ENCODE measurements at regions of chr1 and their contacts with region 1.

Region 1: GRCh38 chr1:245156081-245156735 is 1.4 kb downstream of the KIF26B start:
- DNase-seq: no peak
- ATAC-seq: peak; percentile 96
- H3K4me3 ChIP-seq: peak overlapping the region; percentile 50
- H3K27ac ChIP-seq: no peak overlapping the region
- H3K4me1 ChIP-seq: peaks cover 18% of the 10 kb centered on the region
- H3K27me3 ChIP-seq: peaks cover 12 to 26% of the 10 kb centered on the region in 2 experiments
- CTCF ChIP-seq: peak; percentile 57 to 81 (median 77)
- EP300 ChIP-seq: no peak
- POLR2A ChIP-seq: no peak
- RAD21 ChIP-seq: peak; percentile 65

Region 2: DNA sequence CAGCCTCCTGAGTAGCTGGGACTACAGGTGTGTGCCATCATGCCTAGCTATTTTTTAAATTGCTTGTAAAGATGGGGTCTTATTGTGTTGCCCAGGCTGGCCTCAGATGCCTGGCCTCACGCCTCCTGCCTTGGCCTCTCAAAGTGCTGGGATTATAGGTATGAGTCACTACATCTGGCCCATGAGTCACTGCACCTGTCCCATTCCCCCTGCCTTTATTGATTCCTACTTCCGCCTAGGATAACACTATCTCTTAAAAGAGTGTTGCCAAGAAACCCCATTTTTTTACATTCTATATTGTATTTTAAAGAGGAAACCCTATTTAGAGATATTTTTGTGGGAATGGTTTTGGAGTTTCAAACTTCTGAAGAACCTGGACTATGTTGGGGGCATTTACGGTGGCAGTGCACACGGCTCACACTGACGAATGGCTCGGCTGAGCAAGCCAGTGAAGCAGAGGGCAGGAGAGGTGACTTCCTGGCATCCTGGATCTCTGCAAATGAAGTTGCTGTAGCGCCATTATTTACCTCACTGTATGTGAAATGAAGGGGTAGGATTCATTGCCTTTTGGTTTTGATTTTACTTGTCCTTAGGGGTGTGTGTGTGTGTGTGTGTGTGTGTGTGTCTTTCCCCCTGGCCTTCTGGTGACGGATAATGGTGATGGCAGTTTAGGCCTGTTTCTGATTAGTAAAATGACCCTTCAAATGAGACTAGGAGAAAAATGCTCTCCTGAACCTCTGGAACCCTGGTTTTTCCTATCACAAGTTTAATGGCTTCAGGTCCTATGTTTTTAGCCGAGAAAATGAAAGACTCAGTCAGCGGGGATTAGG is 21.1 kb after region 1 on chr1:
- CTCF ChIA-PET with region 1: no interaction called
- POLR2A ChIA-PET with region 1: no interaction called
- RAD21 ChIA-PET with region 1: no interaction called
- SMC1A ChIA-PET with region 1: no interaction called
- in situ Hi-C with region 1: no loop called
- intact Hi-C with region 1: no loop called
- DNase-seq: no peak
- ATAC-seq: no peak
- H3K4me3 ChIP-seq: no peak overlapping the region
- H3K27ac ChIP-seq: no peak overlapping the region
- H3K4me1 ChIP-seq: no peaks in the 10 kb centered on the region
- H3K27me3 ChIP-seq: peaks cover 0 to 1% of the 10 kb centered on the region in 2 experiments; a peak in 2 of 4 replicates
- CTCF ChIP-seq: no peak
- EP300 ChIP-seq: no peak
- POLR2A ChIP-seq: no peak
- RAD21 ChIP-seq: no peak

Region 3: DNA sequence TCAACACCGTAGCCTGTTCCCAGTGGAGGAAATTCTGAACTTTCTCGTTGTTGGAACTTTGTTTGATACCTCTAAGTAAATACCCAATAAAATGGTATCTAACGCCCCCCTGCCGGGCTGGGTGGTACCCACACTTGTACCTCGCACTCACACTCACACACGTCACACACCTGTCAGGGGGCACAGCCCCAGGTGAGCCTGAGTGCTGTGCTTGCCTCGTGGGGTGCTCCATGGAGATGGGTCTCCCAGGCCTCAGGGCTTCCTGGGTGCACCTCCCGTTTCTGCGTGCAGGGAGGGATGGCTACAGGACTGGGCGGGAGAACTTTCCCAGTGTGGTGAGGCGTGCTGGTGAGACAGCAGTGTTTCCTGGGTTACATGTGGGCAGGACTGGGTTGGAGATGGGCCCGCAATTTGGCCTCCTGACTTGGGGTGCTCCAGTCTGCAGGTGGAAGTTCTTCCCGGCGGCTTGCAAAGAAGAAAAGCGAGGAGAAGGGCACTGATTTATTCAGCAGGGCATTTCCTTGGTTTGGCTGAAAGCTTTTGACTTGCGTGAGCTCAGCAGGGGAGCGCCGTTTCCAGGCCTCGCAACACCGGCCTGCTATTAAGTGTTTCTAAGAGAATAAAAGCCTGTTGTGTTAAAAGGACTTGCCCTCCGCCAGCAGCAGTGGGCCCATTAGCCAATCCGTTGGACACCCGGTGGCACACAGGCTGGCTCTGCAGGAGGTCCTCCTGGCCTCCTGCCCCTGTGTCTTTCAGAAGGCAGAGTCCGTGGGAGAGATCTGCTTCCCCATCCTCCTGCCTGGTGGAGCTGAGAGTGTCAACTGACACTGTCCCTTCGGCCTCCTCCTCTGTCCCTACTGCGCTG is 78.2 kb after region 1 on chr1:
- CTCF ChIA-PET with region 1: no interaction called
- POLR2A ChIA-PET with region 1: no interaction called
- RAD21 ChIA-PET with region 1: no interaction called
- SMC1A ChIA-PET with region 1: no interaction called
- in situ Hi-C with region 1: no loop called
- intact Hi-C with region 1: no loop called
- DNase-seq: no peak
- ATAC-seq: no peak
- H3K4me3 ChIP-seq: no peak overlapping the region
- H3K27ac ChIP-seq: no peak overlapping the region
- H3K4me1 ChIP-seq: no peaks in the 10 kb centered on the region
- H3K27me3 ChIP-seq: peaks cover 2% of the 10 kb centered on the region in 2 experiments; a peak in 2 of 4 replicates
- CTCF ChIP-seq: no peak
- EP300 ChIP-seq: no peak
- POLR2A ChIP-seq: no peak
- RAD21 ChIP-seq: no peak

Region 4: GRCh38 chr1:245277276-245277675 is 121.1 kb after region 1 on chr1:
- CTCF ChIA-PET with region 1: interaction called, 3 read pairs
- POLR2A ChIA-PET with region 1: no interaction called
- RAD21 ChIA-PET with region 1: no interaction called
- SMC1A ChIA-PET with region 1: no interaction called
- in situ Hi-C with region 1: no loop called
- intact Hi-C with region 1: loop called (anchors 10 kb)
- DNase-seq: no peak
- ATAC-seq: peak; percentile 30; the same call in 1 of the 3 replicates
- H3K4me3 ChIP-seq: no peak overlapping the region
- H3K27ac ChIP-seq: no peak overlapping the region
- H3K4me1 ChIP-seq: no peaks in the 10 kb centered on the region
- H3K27me3 ChIP-seq: no peaks in the 10 kb centered on the region
- CTCF ChIP-seq: peak in 2 of 3 experiments; percentile 7 to 31; a peak in 1 of 6 replicates
- EP300 ChIP-seq: no peak
- POLR2A ChIP-seq: no peak
- RAD21 ChIP-seq: no peak

Region 5: GRCh38 chr1:245512980-245513578 is 356.9 kb after region 1 on chr1:
- CTCF ChIA-PET with region 1: no interaction called
- POLR2A ChIA-PET with region 1: no interaction called
- RAD21 ChIA-PET with region 1: interaction called, 3 read pairs
- SMC1A ChIA-PET with region 1: no interaction called
- in situ Hi-C with region 1: no loop called
- intact Hi-C with region 1: loop called (anchors 10 kb)
- DNase-seq: no peak
- ATAC-seq: peak; percentile 69
- H3K4me3 ChIP-seq: no peak overlapping the region
- H3K27ac ChIP-seq: no peak overlapping the region
- H3K4me1 ChIP-seq: no peaks in the 10 kb centered on the region
- H3K27me3 ChIP-seq: no peaks in the 10 kb centered on the region; a peak in 1 of 4 replicates
- CTCF ChIP-seq: peak in 2 of 3 experiments; percentile 13 to 21; a peak in 1 of 6 replicates
- EP300 ChIP-seq: no peak
- POLR2A ChIP-seq: no peak
- RAD21 ChIP-seq: no peak

Region 6: DNA sequence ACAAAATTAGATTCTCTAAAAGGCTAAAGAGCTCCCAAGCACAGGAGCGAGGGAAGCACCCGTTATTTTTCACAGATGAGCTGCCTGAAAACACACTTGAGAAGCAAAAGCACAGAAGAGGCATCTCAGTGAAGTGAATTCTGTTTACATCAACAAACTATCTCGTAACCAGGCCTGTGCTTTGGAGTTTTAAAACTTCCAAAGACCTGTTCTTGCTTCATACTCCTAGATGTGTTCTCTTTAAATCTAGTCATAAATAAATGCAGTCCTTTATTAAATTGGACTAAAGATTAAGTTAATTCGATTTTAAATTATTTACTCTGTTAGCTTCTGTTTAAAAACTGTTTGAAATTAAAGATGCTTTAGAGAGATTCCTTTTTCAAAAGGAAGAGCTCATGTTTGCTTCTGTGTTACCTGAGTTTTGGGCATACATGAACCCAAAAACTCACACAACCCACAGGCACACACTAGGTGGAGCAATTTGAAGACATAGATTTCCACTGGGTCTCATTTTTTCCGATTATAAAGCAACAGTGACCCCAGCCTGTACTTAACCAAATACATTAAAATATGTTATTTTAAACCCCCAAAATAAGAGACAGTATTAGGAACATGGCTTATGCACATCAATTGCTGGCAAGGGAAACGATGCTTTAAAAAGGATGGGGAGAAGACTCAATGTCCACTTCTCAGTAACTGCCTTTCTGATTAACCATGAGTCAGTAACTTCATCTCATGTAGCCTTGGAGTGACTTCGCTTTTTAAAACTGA is 702.7 kb after region 1 on chr1:
- CTCF ChIA-PET with region 1: interaction called, 13 read pairs
- POLR2A ChIA-PET with region 1: no interaction called
- RAD21 ChIA-PET with region 1: no interaction called
- SMC1A ChIA-PET with region 1: no interaction called
- in situ Hi-C with region 1: no loop called
- intact Hi-C with region 1: no loop called
- DNase-seq: no peak
- ATAC-seq: no peak
- H3K4me3 ChIP-seq: no peak overlapping the region
- H3K27ac ChIP-seq: no peak overlapping the region
- H3K4me1 ChIP-seq: no peaks in the 10 kb centered on the region
- H3K27me3 ChIP-seq: no peaks in the 10 kb centered on the region
- CTCF ChIP-seq: peak in 2 of 3 experiments; percentile 7 to 29; a peak in 3 of 6 replicates
- EP300 ChIP-seq: no peak
- POLR2A ChIP-seq: no peak
- RAD21 ChIP-seq: no peak

Region 7: GRCh38 chr1:246280551-246280950 is 1124.3 kb after region 1 on chr1:
- CTCF ChIA-PET with region 1: interaction called, 3 read pairs
- POLR2A ChIA-PET with region 1: no interaction called
- RAD21 ChIA-PET with region 1: no interaction called
- SMC1A ChIA-PET with region 1: interaction called, 7 read pairs
- in situ Hi-C with region 1: no loop called
- intact Hi-C with region 1: loop called (anchors 5 kb)
- DNase-seq: no peak
- ATAC-seq: peak; percentile 62
- H3K4me3 ChIP-seq: no peak overlapping the region
- H3K27ac ChIP-seq: no peak overlapping the region
- H3K4me1 ChIP-seq: no peaks in the 10 kb centered on the region
- H3K27me3 ChIP-seq: no peaks in the 10 kb centered on the region
- CTCF ChIP-seq: peak in 1 of 3 experiments; percentile 20; a peak in 1 of 6 replicates
- EP300 ChIP-seq: no peak
- POLR2A ChIP-seq: no peak
- RAD21 ChIP-seq: peak; percentile 61

Region 8: DNA sequence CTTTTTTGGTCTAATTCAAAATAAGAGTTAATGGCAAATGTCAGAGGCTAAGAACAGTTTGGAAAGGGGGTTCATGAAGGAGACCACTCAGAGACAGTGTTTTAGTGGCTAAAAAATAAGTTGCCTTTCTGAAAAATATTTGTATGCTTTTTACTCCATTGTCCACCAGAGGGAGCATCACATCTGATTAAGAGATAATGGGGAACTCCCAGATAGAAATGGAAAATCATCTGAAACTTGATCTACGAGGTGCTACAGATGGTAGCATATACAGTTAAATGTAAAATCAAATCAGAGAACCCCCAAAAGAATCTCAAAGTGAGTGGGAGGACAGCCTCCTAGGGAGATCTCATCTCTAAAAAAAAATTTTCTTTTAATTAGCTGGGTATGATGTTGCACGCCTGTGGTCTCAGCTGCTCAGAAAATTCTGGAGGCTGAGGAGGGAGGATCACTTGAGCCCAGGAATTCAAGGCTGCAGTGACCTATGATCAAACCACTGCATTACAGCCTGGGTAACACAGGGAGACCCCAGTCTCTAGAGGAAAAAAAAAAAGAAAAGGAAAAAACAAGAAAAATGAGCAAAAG is 1341.2 kb after region 1 on chr1:
- CTCF ChIA-PET with region 1: interaction called, 13 read pairs
- POLR2A ChIA-PET with region 1: no interaction called
- RAD21 ChIA-PET with region 1: no interaction called
- SMC1A ChIA-PET with region 1: no interaction called
- in situ Hi-C with region 1: no loop called
- intact Hi-C with region 1: loop called (anchors 2 kb)
- DNase-seq: no peak
- ATAC-seq: peak; percentile 86
- H3K4me3 ChIP-seq: no peak overlapping the region
- H3K27ac ChIP-seq: no peak overlapping the region
- H3K4me1 ChIP-seq: no peaks in the 10 kb centered on the region; the same call in 1 of the 2 replicates
- H3K27me3 ChIP-seq: no peaks in the 10 kb centered on the region
- CTCF ChIP-seq: peak; percentile 52 to 78 (median 57); a peak in 5 of 6 replicates
- EP300 ChIP-seq: no peak
- POLR2A ChIP-seq: no peak
- RAD21 ChIP-seq: peak; percentile 81

Region 9: DNA sequence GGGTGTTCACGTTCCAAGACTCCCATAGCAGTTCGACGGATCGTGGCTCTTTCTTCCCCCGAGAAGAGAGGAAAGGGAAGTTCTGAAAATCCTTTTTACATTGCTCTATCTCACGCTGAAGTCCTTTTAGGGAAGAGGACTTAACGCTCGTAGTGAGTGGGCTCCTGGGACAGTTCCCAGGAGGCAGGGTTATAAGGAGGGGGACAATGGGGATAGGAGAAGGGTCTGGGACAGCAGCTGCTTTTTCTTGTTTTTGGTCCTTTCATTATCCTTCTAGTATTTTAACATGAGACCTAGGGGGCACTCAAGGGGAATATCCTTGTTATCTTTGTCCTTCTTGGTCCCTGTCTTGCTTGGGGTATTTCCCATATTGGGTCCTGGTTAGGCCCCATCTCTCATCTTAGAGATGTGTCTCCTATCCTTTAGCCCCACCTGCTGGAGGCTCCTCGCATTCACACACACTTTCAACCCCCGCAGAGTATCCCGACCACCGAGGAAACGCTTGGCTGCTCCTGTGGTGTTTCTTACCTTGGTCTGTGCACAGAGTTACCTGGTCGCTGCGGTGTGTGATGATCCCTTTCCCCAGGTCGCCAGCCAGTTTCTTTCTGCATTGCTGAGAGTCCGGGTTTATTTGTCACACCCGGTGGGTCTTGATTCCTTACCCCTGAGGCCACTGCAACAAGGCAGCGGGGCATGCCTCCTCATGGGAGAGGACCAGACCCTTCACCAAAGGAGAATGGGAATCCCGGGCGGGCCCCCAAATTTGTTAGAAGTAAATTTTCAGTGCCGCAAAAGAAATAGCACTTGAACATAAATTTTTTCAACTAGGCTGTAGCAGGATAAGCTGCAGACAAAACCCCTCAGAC is 1597.7 kb after region 1 on chr1:
- CTCF ChIA-PET with region 1: no interaction called
- POLR2A ChIA-PET with region 1: no interaction called
- RAD21 ChIA-PET with region 1: no interaction called
- SMC1A ChIA-PET with region 1: no interaction called
- in situ Hi-C with region 1: no loop called
- intact Hi-C with region 1: loop called (anchors 10 kb)
- DNase-seq: peak; percentile 8
- ATAC-seq: peak; percentile 100
- H3K4me3 ChIP-seq: no peak overlapping the region
- H3K27ac ChIP-seq: no peak overlapping the region
- H3K4me1 ChIP-seq: no peaks in the 10 kb centered on the region
- H3K27me3 ChIP-seq: no peaks in the 10 kb centered on the region
- CTCF ChIP-seq: peak; percentile 78 to 86 (median 83)
- EP300 ChIP-seq: no peak
- POLR2A ChIP-seq: no peak
- RAD21 ChIP-seq: peak; percentile 87